GM23248 (cell line): ENCODE measurements at regions of chr4 and their contacts with region 1.

Region 1: GRCh38 chr4:165131247-165131832 is 18.7 kb upstream of the TMEM192 start:
- DNase-seq: peak; percentile 53
- H3K4me3 ChIP-seq: no peak overlapping the region
- H3K27ac ChIP-seq: no peak overlapping the region
- H3K4me1 ChIP-seq: no peaks in the 10 kb centered on the region; the same call in 1 of the 2 replicates
- H3K27me3 ChIP-seq: no peaks in the 10 kb centered on the region; the same call in 1 of the 2 replicates

Region 2: GRCh38 chr4:165343353-165344191 is 212.2 kb after region 1 on chr4:
- in situ Hi-C with region 1: loop called (anchors 10 kb)
- DNase-seq: no peak
- H3K4me3 ChIP-seq: no peak overlapping the region
- H3K27ac ChIP-seq: no peak overlapping the region
- H3K4me1 ChIP-seq: 0 out of 2 replicates have a peak, but pooled peaks cover 1% of the 10 kb centered on the region
- H3K27me3 ChIP-seq: no peaks in the 10 kb centered on the region

Region 3: GRCh38 chr4:166091912-166092510 is 960.7 kb after region 1 on chr4:
- in situ Hi-C with region 1: loop called (anchors 25 kb)
- DNase-seq: peak; percentile 66
- H3K4me3 ChIP-seq: no peak overlapping the region
- H3K27ac ChIP-seq: no peak overlapping the region
- H3K4me1 ChIP-seq: no peaks in the 10 kb centered on the region
- H3K27me3 ChIP-seq: no peaks in the 10 kb centered on the region